GM10248 (cell line): ENCODE measurements at regions of chr6 and their contacts with region 1.

Region 1: DNA sequence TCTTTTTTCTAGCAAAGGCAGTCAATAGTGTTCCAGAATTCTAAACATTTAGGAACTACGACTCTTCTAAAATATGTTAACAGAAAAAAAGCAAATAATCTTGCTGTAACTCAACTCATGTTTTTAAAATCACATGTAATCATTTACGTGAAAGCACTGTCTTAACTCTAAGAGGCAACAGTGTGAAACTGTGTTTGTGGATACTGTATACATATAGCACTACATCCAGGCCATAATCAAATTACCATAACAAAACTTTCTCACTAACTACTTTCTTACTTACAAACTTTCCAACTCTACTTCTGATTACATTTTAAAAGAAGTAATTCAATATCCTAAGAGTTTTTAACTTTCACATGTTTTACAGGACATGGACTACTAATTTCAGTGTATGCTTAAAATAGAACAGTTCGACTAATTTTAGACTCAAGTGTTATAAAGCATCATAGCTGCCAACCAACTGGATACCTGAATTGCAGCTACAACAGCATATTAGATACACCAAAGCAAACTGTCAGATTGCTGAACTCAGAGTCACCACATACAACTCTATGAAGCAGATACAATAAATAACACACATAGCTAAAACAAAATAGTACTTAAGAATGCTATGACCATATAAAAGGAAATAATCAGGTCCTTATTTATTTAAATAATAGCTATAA is 121.6 kb upstream of the BEND6 start:
- DNase-seq: no peak
- CTCF ChIP-seq: no peak

Region 2: GRCh38 chr6:56821005-56821432 is 12.2 kb before region 1 on chr6:
- CTCF ChIA-PET with region 1: interaction called, 12 read pairs
- POLR2A ChIA-PET with region 1: no interaction called
- DNase-seq: no peak
- CTCF ChIP-seq: no peak